Activated CD4-positive, alpha-beta memory T cell treated with anti-CD3 and anti-CD28 coated beads for 36 hours (primary cell): ENCODE measurements at regions of chr3 and their contacts with region 1.

Region 1: DNA sequence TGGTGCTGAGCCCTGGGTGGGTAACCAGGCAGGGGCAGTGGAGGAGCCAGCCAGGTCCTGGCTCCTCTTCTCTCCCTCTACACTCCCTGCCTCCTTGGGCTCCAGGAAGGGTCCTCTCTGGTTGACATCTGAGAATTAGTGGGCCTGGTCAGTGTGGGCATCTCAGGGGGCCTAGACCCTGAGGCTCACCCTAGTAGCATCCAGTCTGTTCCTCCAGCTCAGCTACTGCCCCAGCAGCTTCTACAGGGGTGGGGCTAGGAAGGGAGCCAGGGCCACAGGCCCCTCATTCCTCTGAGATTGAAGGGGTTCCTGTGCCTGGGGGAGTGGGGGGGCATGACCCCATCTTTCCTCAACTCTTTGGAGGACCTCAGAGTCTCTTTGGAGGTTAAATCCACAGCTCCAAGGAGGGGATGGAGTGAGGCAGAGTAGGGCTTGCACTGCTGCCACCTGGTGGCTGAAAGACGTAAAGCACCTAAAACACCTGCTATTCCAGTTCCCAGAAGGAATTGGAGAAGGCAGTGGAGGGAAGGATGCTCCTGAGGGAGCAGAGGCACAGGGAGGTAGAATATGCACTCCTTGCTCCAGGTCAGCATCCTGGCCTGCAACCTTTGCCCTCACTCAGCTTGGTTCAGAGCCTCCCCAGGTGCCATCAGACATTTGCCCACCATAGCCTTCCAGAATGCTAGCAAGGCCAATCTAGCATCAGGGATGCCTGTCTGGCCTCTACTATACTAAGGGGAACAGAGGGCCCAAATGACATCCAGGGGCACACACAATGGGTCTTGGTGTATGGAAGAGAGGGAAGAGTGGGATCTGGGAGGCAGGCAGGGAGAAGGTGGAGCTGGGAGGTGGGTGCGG is 25.1 kb downstream of the C3orf18 start:
- DNase-seq: peak; percentile 72
- H3K4me3 Mint-ChIP-seq: no peak overlapping the region
- H3K27ac Mint-ChIP-seq: no peak overlapping the region
- H3K4me1 Mint-ChIP-seq: no peaks in the 10 kb centered on the region
- H3K27me3 Mint-ChIP-seq: no peaks in the 10 kb centered on the region

Region 2: GRCh38 chr3:50350527-50351322 is 191.7 kb before region 1 on chr3 and contains the starts of genes CYB561D2 and NPRL2:
- CTCF ChIA-PET with region 1: interaction called, 19 read pairs
- POLR2A ChIA-PET with region 1: no interaction called
- intact Hi-C with region 1: loop called (anchors 1 kb)
- DNase-seq: peak; percentile 100
- H3K4me3 Mint-ChIP-seq: peak within 1 kb of the TSS; percentile 94
- H3K27ac Mint-ChIP-seq: peak within 1 kb of the TSS; percentile 97
- H3K4me1 Mint-ChIP-seq: peaks cover 62% of the 10 kb centered on the region
- H3K27me3 Mint-ChIP-seq: no peaks in the 10 kb centered on the region
- total RNA-seq, gene CYB561D2: 17.8 to 20.1 TPM
- total RNA-seq, gene NPRL2: 33.2 to 35.8 TPM

Region 3: DNA sequence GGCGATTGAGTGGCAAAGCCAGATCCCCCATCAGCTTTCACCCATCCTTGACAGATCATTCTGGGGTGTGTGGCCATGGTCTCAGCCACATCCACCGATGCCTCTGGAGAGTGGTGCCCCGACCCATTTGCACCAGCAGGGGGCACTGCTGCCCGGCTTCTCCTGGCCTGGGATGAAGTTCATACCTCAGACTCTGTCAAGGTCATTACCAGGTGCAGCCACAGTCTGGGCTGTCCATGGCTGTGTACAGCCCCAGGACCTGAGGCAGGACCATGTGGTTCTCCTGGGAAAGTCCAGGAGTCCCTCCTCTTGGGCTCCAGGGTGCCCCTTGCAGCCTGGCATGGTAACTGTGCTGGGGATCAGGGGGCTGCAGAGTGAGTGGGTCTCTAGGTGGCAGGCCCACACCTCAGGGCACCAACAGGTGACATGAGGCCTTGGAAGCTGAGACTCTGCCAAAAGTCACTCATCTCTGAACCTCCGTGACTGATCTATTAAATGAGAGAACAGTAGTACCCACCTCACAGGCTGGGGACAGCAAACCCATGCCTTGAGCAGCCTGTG is 106.2 kb before region 1 on chr3:
- CTCF ChIA-PET with region 1: interaction called, 31 read pairs
- POLR2A ChIA-PET with region 1: no interaction called
- intact Hi-C with region 1: loop called (anchors 1 kb)
- DNase-seq: peak; percentile 85
- H3K4me3 Mint-ChIP-seq: no peak overlapping the region
- H3K27ac Mint-ChIP-seq: no peak overlapping the region
- H3K4me1 Mint-ChIP-seq: no peaks in the 10 kb centered on the region
- H3K27me3 Mint-ChIP-seq: peaks cover 3% of the 10 kb centered on the region

Region 4: GRCh38 chr3:50509715-50510114 is 32.7 kb before region 1 on chr3:
- CTCF ChIA-PET with region 1: interaction called, 11 read pairs
- POLR2A ChIA-PET with region 1: no interaction called
- intact Hi-C with region 1: no loop called
- DNase-seq: no peak
- H3K4me3 Mint-ChIP-seq: no peak overlapping the region
- H3K27ac Mint-ChIP-seq: no peak overlapping the region
- H3K4me1 Mint-ChIP-seq: no peaks in the 10 kb centered on the region
- H3K27me3 Mint-ChIP-seq: no peaks in the 10 kb centered on the region

Region 5: GRCh38 chr3:50525987-50526386 is 16.4 kb before region 1 on chr3:
- CTCF ChIA-PET with region 1: interaction called, 28 read pairs
- POLR2A ChIA-PET with region 1: no interaction called
- intact Hi-C with region 1: no loop called
- DNase-seq: peak; percentile 81
- H3K4me3 Mint-ChIP-seq: no peak overlapping the region
- H3K27ac Mint-ChIP-seq: no peak overlapping the region
- H3K4me1 Mint-ChIP-seq: no peaks in the 10 kb centered on the region
- H3K27me3 Mint-ChIP-seq: peaks cover 3% of the 10 kb centered on the region